Activated CD4-positive, alpha-beta T cell treated with anti-CD3 and anti-CD28 coated beads, Interleukin-2, amount 10 ng/mL, durations not matched to agents 24 days and 14 days (primary cell): ENCODE measurements at regions of chr1 and their contacts with region 1.

Region 1: DNA sequence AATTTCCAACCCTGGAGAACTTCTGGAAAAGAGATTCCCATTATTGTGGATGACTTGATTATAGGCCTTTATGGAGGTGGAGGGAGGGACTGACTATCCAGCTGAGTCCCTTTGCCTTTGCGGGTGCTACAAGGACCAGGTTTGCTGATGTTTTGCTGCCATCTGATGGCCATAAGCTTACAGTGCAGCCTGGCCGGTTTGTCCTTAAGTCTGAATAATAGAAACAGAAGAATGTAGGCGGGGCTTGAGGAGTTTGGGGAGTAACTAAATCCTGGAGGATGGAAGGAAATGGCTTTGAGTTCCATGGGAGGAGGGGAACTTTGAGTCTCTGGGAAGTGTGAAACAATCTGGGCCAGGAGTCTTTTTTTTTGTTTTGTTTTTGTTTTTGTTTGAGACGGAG is 55.7 kb upstream of the CD1D start:
- DNase-seq: peak; percentile 91
- H3K4me3 Mint-ChIP-seq: no peak overlapping the region
- H3K27ac Mint-ChIP-seq: no peak overlapping the region
- H3K4me1 Mint-ChIP-seq: peaks cover 4% of the 10 kb centered on the region
- H3K27me3 Mint-ChIP-seq: peaks cover 29% of the 10 kb centered on the region

Region 2: DNA sequence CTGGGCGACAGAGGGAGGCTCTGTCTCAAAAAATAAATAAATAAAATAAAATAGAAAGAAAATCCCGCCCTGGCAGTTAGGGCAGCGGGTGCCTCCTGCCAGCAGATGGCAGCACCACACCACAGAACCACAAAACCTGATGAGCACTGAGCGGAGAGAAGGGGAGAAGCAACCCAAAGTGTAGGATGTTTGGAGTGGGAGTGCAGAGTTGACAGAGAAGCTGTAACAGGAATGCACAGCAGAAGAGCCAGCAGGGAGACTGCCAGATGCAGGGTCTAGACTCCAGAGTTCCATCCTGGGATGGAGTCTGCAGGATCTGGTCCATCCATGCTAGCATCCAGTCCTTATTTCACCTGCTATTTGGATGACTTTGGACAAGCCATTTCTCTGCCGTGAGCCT is 161.3 kb before region 1 on chr1:
- intact Hi-C with region 1: loop called (anchors 2 kb)
- DNase-seq: peak; percentile 83
- H3K4me3 Mint-ChIP-seq: no peak overlapping the region
- H3K27ac Mint-ChIP-seq: no peak overlapping the region
- H3K4me1 Mint-ChIP-seq: no peaks in the 10 kb centered on the region
- H3K27me3 Mint-ChIP-seq: peaks cover 3% of the 10 kb centered on the region

Region 3: DNA sequence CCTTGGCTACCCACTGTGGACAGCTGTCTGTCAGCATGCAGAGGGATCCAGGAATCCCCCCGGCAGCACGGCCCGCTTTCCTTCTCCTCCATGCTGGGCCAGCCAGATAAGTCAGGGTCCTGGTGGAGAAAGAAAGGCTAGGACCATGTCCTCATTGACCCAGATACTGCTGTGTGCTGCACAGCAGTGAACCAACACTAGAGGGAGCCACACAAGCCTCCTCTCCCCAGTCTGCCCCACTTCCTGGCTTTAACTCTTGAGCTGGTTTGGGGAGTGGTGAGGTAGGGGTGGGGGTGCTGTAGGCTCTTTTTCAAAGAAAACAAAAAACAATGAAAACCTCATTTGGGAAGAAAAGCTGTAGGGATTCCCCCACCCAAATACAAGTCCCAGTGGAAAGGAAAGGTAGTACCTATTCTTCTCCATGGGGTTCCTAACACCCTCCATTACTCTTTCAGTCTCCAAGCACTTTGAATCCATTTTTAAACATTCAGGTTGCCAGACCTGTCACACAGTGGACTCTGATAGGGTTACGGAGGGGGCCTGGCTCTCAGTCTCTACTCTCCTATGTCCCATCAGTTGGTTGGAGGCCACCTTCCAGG is 29.2 kb before region 1 on chr1:
- intact Hi-C with region 1: loop called (anchors 1 kb)
- DNase-seq: peak; percentile 78
- H3K4me3 Mint-ChIP-seq: no peak overlapping the region
- H3K27ac Mint-ChIP-seq: no peak overlapping the region
- H3K4me1 Mint-ChIP-seq: no peaks in the 10 kb centered on the region
- H3K27me3 Mint-ChIP-seq: no peaks in the 10 kb centered on the region

Region 4: DNA sequence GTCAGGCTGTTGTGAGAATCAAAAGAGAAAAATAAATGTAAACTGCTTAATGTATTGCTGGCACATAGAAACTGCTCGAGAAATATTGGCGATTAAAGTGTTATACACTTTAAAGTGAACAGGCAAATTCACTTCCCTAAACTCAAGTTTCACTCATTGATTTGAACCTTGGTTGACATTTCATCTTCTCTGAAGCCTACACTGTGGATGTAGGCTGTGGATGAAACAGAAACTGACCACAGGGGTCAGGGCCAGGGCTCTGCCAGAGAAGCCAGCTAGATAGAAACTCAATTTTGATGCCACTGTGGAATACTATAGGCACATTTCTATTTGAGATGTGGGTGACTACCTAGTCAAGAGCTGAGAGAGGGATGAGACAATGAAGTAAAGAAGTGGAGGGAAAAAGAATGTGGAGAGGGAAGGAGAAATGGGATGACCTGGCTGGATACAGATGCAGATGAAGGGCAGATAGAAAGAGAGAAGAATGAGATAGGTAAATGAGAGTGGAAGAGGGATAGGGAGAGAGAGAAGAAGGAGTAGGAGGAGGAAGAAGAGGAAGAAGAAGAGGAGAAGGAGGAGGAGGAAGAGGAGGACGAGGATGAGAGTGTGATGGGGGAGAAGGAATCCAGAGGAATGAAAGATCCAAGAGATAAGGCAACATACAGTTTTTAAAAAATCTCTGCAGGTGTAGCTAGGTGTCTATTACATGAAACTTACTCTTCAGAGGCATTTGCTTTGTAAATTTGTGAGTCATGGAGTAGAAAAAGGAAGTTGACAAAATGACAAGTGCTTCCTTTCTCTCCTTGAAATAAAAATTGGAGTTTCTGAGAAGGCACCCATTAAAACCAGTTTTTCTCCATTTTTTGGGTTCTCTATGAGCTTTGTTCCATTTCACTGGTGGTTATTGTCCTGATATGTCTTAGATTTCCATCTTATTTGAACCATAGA is 38.3 kb after region 1 on chr1:
- intact Hi-C with region 1: no loop called
- DNase-seq: no peak
- H3K4me3 Mint-ChIP-seq: no peak overlapping the region
- H3K27ac Mint-ChIP-seq: no peak overlapping the region
- H3K4me1 Mint-ChIP-seq: peaks cover 2% of the 10 kb centered on the region
- H3K27me3 Mint-ChIP-seq: peaks cover 34% of the 10 kb centered on the region